Activated CD4-positive, alpha-beta T cell treated with anti-CD3 and anti-CD28 coated beads for 36 hours (primary cell): ENCODE measurements at regions of chr3 and their contacts with region 1.

Region 1: GRCh38 chr3:45043728-45044299 is 17.7 kb downstream of the CLEC3B start:
- DNase-seq: no peak
- ATAC-seq: no peak
- H3K4me3 Mint-ChIP-seq: no peak overlapping the region
- H3K27ac Mint-ChIP-seq: no peak overlapping the region
- H3K4me1 Mint-ChIP-seq: peaks cover 23% of the 10 kb centered on the region
- H3K27me3 Mint-ChIP-seq: peaks cover 3% of the 10 kb centered on the region

Region 2: GRCh38 chr3:45055411-45056143 is 11.8 kb after region 1 on chr3:
- CTCF ChIA-PET with region 1: interaction called, 57 read pairs
- POLR2A ChIA-PET with region 1: no interaction called
- intact Hi-C with region 1: no loop called
- DNase-seq: peak; percentile 34
- ATAC-seq: peak; percentile 55
- H3K4me3 Mint-ChIP-seq: no peak overlapping the region
- H3K27ac Mint-ChIP-seq: no peak overlapping the region
- H3K4me1 Mint-ChIP-seq: peaks cover 21% of the 10 kb centered on the region
- H3K27me3 Mint-ChIP-seq: no peaks in the 10 kb centered on the region

Region 3: GRCh38 chr3:45064512-45065372 is 20.9 kb after region 1 on chr3:
- CTCF ChIA-PET with region 1: interaction called, 20 read pairs
- POLR2A ChIA-PET with region 1: no interaction called
- intact Hi-C with region 1: no loop called
- DNase-seq: peak; percentile 80
- ATAC-seq: peak; percentile 84
- H3K4me3 Mint-ChIP-seq: peak overlapping the region; percentile 37
- H3K27ac Mint-ChIP-seq: peak overlapping the region; percentile 82
- H3K4me1 Mint-ChIP-seq: peaks cover 30% of the 10 kb centered on the region
- H3K27me3 Mint-ChIP-seq: peaks cover 2% of the 10 kb centered on the region

Region 4: DNA sequence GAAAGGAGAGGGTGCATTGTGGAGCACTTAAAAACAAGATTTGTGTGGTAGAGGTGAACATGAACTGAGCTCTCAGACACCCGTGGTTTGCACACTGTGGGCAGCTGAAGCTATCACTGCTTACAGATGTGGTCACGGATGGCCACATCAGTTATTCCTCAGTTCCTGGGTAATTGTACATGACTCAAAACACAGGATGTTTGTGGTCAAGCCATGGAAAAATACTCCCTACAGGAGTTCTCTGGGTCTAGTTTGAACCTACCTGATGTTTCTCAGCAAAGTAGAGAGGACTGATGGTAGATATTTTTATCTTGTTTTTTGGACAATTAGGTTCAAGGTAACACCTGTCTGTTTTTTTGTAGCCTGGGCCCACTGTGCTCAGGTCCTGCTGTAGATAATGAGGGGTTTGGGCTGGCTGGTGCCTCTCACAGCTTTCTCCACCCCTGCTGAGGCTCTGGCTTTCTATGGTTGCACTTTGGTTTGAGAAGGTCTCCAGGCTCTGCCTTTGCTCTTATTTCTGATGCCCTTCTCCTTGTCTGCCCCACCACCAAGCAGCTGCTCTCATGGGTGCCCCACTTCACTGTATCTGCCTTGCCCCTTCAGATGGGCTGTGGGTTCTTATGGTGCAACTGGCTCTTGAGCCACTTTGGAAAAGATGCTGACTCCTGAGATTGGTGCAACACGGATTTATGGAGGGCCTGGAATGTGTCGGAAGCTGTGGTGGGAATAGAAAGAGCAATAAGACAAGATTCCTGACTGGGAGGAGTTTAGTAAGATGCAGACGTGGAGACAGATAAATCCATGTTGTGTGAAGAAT is 62.2 kb after region 1 on chr3:
- CTCF ChIA-PET with region 1: interaction called, 3 read pairs
- POLR2A ChIA-PET with region 1: no interaction called
- intact Hi-C with region 1: loop called in 1 of 2 experiments (anchors 5 kb)
- DNase-seq: peak; percentile 85
- ATAC-seq: peak; percentile 81
- H3K4me3 Mint-ChIP-seq: peak overlapping the region; percentile 37
- H3K27ac Mint-ChIP-seq: peak overlapping the region; percentile 62
- H3K4me1 Mint-ChIP-seq: peaks cover 81% of the 10 kb centered on the region
- H3K27me3 Mint-ChIP-seq: peaks cover 4% of the 10 kb centered on the region

Region 5: DNA sequence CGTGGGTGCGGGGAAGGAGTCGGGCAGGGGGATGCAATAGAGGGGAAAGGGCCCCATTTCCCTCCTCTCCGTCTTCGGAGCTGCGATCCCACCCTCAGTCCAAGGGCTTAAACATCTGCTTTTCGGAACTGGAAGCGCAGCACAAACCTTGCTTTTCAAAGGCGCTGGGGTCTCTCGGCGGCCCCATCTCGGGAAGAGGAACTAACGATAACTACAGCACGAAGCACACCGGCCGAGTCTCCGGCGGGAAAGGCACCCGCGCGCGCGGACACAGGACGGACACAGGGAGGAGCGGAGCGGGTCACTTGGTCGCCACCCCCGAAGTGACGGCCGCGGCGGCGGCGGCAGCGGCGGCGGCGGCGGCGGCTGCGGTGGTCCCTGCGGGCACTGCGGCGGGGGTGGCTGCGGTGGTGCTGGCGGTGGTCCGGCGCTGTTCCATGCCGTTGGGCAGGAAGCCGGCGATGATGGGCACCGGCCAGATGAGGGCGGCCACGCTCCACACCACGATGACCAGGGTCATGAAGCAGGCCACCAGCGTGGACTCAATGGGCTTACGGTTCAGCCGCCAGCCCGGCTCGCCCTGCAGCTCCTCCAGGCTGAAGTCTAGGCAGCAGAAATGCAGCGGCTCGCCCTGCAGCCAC is 181.1 kb after region 1 on chr3:
- CTCF ChIA-PET with region 1: interaction called, 11 read pairs
- POLR2A ChIA-PET with region 1: no interaction called
- intact Hi-C with region 1: no loop called
- DNase-seq: peak; percentile 60
- ATAC-seq: no peak
- H3K4me3 Mint-ChIP-seq: peak overlapping the region; percentile 73
- H3K27ac Mint-ChIP-seq: no peak overlapping the region
- H3K4me1 Mint-ChIP-seq: peaks cover 13% of the 10 kb centered on the region
- H3K27me3 Mint-ChIP-seq: peaks cover 62% of the 10 kb centered on the region

Region 6: DNA sequence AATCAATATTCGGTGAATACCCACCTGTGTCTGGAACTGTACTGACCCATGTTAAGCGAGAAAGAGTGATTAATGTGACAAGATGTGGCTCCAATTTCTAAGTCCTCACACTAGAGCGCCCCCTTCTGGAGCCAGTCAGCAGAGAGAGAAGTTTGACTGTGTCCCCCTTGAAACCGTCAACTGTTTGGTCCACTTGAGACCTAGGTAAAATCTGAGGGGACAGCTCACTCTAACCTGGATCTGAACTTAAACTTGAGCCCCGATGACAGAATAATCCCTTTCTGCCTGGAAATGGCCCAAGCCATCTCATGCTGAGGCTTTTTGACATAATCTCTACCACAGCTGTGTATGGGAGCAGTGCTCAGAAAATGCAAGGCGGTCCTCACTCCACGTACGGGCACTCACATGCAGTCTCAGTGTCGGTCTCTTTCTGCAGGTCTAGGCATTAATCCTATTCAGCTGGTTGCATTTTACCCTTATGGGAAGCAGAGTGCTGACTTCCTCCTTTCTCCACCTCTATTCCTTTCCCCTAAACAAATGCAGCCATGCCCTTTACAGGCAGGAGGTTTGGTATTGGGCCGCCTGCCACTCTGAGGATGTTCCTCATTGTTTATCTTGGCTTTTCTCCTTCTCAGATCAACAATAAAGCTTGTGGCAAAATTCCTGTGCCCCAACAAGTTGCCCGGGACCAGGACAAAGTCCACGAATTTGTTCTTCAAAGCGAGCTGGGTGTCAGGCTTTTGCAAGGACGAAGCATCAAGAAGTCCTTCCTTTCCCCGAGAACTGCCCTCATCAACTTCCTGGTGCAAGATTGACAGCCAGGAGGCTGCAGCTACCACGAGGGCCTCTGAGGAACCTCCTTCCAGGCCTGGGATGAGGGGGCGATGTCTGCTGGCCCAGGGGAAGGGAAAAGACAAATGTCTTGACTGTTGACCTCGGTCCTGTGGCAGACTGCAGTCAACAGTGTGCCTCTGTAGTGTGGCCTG is 503.2 kb after region 1 on chr3:
- CTCF ChIA-PET with region 1: interaction called, 11 read pairs
- POLR2A ChIA-PET with region 1: no interaction called
- intact Hi-C with region 1: no loop called
- DNase-seq: peak; percentile 75
- ATAC-seq: peak; percentile 39
- H3K4me3 Mint-ChIP-seq: no peak overlapping the region
- H3K27ac Mint-ChIP-seq: no peak overlapping the region
- H3K4me1 Mint-ChIP-seq: peaks cover 5% of the 10 kb centered on the region
- H3K27me3 Mint-ChIP-seq: no peaks in the 10 kb centered on the region